AG04449 (cell line): ENCODE measurements at regions of chr11 and their contacts with region 1.

Region 1: GRCh38 chr11:57249384-57250319 is 12.6 kb upstream of the APLNR start:
- DNase-seq: no peak
- H3K4me3 ChIP-seq: no peak overlapping the region
- CTCF ChIP-seq: peak; percentile 82

Region 2: DNA sequence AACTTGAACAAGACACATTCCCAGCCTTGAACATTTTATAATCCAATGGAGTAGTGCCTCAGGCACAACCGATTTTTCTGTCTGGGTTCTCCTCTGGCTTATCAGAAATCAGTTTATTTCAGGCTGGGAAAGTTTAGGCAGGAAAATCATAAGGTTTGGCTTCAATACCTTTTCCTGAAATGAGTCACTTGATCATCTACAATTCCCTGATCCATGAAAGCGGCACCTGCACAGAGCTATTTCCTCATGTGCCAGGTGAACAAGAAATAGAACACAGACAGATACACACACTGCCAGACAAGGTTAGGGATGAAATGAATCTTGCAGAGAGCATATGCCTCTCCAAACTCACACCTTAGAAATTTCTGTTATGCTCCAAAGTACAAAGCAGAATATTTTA is 394.4 kb before region 1 on chr11:
- CTCF ChIA-PET with region 1: interaction called, 16 read pairs
- POLR2A ChIA-PET with region 1: no interaction called
- DNase-seq: no peak
- H3K4me3 ChIP-seq: no peak overlapping the region
- CTCF ChIP-seq: no peak

Region 3: GRCh38 chr11:57085611-57086010 is 164.0 kb before region 1 on chr11:
- CTCF ChIA-PET with region 1: interaction called, 23 read pairs
- POLR2A ChIA-PET with region 1: no interaction called
- DNase-seq: no peak
- H3K4me3 ChIP-seq: no peak overlapping the region
- CTCF ChIP-seq: no peak

Region 4: GRCh38 chr11:57140568-57140967 is 109.1 kb before region 1 on chr11:
- CTCF ChIA-PET with region 1: interaction called, 496 read pairs
- POLR2A ChIA-PET with region 1: no interaction called
- DNase-seq: no peak
- H3K4me3 ChIP-seq: no peak overlapping the region
- CTCF ChIP-seq: no peak

Region 5: DNA sequence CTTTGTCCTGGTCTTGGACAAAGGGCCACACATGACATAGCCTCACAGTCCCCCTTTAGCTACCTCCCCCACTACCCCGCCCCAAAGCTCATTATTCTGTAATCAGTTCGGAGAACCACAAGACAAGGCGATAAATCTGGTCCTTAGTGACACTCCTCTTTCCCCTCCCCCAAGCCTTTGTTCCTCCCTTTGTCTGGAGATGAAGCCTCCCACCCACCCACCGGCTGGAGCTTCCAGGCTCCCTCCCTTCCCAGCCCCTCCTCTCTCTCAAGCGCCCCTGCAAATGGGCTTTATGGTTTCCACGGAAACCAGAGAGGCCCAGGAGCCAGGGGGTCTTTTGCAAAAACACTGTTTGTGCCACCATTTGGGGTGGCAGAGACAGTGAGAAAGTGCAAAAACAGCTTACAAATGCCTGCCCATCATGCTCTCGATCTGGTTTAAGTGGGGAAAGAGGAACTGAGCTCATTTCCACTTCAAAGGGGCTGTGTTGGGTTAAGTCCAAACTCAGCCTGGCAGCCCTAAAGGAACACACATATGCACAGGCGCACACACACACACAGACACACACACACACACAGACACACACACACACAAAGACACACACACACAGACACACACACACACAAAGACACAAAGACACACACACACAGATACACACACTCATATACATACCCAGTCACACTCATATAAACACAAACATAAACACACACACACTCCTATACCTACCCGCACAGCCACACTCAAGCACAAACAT is 36.1 kb before region 1 on chr11:
- CTCF ChIA-PET with region 1: interaction called, 124 read pairs
- POLR2A ChIA-PET with region 1: no interaction called
- DNase-seq: no peak
- H3K4me3 ChIP-seq: no peak overlapping the region
- CTCF ChIP-seq: no peak

Region 6: DNA sequence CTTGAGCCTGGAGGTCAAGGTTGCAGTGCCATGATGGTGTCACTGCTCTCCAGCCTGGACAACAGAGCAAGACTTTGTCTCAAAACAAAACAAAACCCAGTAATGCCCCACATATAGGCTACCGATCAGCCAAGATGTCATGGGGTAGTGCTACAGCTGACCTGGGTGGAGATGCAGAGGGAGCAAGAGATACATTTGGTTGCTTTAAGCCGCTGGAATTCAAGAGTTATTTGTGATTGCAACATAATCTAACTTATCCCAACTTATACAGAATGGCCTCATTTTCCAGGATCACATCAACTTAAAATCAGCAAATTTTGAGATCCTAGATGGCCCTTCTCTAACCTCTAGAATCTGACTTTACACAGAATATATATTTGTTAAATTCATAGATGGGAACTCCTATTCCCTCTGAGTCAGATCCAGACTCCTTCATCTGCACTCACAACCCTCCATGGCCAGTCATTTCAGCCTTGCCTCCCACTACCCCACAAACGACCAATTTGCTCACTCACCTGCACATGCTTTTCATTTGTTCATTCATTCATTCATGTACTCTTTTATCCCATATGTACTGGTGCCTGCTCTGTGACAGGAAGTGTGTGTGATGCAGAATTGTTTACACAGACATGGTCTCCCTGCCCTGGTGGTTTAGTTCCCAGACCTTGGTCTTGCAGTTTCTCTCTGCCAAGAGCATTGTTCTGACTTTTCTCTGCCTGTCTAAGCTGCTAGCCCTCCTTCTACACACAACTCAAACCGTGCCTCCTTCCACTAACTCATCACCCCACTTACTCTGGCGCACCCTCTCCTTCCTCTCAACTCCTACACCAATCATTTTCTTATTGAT is 11.5 kb after region 1 on chr11:
- CTCF ChIA-PET with region 1: interaction called, 36 read pairs
- POLR2A ChIA-PET with region 1: no interaction called
- DNase-seq: no peak
- H3K4me3 ChIP-seq: no peak overlapping the region
- CTCF ChIP-seq: no peak

Region 7: DNA sequence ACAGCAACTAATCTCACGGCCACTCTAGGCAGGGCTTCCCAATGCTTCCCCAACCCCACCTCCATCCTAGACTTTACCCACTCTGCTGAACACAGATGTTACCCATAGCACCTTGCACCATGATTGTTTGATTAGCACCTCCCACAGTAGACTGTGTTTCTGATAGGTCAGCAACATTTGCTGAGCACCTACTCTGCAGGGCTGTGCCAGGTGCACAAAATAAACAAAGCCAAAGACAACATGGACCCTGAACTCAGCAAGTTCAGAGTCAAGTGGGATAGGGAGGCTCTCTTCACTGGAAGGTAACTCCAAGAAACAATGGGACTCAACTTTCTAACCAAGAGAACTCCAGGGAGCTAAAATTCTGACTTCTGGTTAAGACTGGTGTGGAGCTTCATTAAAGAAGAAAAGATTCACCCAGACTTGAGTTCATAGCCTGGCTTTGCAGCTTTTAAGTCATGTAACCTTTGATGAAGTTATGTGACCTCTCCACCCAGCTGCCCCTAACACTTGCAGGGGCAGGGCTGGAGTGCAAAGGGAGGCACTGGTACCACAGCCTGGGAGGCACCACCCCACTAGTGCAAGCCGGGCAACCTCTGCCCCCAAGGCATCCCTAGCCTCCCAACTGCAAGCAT is 204.0 kb after region 1 on chr11:
- CTCF ChIA-PET with region 1: no interaction called
- POLR2A ChIA-PET with region 1: no interaction called
- DNase-seq: no peak
- H3K4me3 ChIP-seq: no peak overlapping the region
- CTCF ChIP-seq: no peak

Region 8: GRCh38 chr11:57463671-57464538 is 214.3 kb after region 1 on chr11:
- CTCF ChIA-PET with region 1: no interaction called
- POLR2A ChIA-PET with region 1: no interaction called
- DNase-seq: no peak
- H3K4me3 ChIP-seq: no peak overlapping the region
- CTCF ChIP-seq: no peak